H1 (cell line): ENCODE measurements at regions of chr9 and their contacts with region 1.

Region 1: GRCh38 chr9:35675732-35676392 is 2.1 kb downstream of the CA9 start:
- DNase-seq: peak in 1 of 2 experiments; percentile 98
- H3K4me3 ChIP-seq: peak overlapping the region; percentile 55 to 69 (median 60)
- H3K27ac ChIP-seq: no peak overlapping the region
- H3K4me1 ChIP-seq: peaks cover 0 to 15% (median 3%) of the 10 kb centered on the region in 4 experiments; a peak in 5 of 7 replicates
- H3K27me3 ChIP-seq: peaks cover 0 to 3% (median 3%) of the 10 kb centered on the region in 4 experiments; a peak in 4 of 7 replicates
- CTCF ChIP-seq: no peak
- EP300 ChIP-seq: no peak
- POLR2A ChIP-seq: peak; percentile 43 to 55; a peak in 2 of 3 replicates
- RAD21 ChIP-seq: no peak

Region 2: GRCh38 chr9:35636135-35636876 is 39.6 kb before region 1 on chr9:
- CTCF ChIA-PET with region 1: no interaction called
- POLR2A ChIA-PET with region 1: no interaction called
- DNase-seq: no peak
- H3K4me3 ChIP-seq: no peak overlapping the region
- H3K27ac ChIP-seq: no peak overlapping the region
- H3K4me1 ChIP-seq: no peaks in the 10 kb centered on the region
- H3K27me3 ChIP-seq: no peaks in the 10 kb centered on the region
- CTCF ChIP-seq: no peak
- EP300 ChIP-seq: no peak
- POLR2A ChIP-seq: no peak
- RAD21 ChIP-seq: no peak

Region 3: DNA sequence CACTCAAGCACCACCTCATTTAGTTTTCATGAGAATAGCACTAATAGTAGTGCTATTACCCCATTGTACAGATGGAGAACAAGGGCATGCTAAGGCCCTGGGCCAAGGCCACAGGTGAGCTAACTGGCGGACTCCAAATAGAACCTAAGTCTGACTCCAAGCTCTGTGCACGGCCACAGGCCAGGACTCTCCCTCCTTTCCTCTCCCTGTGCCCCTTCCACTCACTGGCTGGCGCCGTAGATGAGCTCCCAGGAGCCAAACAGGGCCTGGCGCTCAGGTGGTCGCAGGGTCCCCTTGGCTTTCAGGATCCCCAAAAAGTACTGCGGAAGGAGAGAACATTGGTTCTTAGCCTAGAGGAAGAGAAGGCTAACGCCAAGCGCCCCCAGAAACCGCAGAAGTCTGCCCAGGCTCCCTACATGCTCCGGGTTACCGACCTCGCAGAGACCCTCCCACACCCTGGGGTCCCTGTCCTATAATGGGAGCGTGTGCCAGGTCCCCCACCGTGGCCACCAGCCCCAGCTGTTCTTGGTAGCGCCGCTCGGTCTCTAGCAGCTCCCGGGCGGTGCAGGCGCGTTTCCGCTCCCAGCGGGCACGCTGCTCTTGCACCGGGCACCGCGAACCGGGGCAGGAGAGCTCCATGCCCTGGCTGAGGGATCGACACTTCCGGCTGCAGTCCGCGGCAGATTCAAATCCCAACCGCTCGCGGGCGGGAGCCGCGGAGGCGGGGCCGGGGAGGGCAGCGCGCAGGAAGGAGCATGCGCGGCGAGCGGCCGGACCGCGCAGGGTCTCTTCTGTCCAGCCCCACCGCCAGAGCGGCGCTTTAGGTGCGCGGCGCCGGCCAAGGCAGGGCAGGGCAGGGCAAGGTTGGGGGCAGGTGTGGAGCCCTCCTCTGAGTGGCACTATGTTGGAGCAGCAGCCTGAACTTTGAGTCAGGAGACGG is 11.1 kb before region 1 on chr9 and contains the start of gene ARHGEF39:
- CTCF ChIA-PET with region 1: interaction called, 29 read pairs
- POLR2A ChIA-PET with region 1: interaction called, 55 read pairs
- DNase-seq: peak; percentile 81 to 92
- H3K4me3 ChIP-seq: peak within 1 kb of the TSS; percentile 50 to 84 (median 78)
- H3K27ac ChIP-seq: 0 out of 2 replicates have a peak within 1 kb of the TSS, but pooled peaks have one; percentile 56
- H3K4me1 ChIP-seq: peaks cover 0 to 5% (median 1%) of the 10 kb centered on the region in 4 experiments; a peak in 5 of 7 replicates
- H3K27me3 ChIP-seq: no peaks in the 10 kb centered on the region
- CTCF ChIP-seq: peak; percentile 58 to 65 (median 60); a peak in 3 of 4 replicates
- EP300 ChIP-seq: no peak
- POLR2A ChIP-seq: peak in 1 of 2 experiments; percentile 75; a peak in 2 of 3 replicates
- RAD21 ChIP-seq: peak; percentile 41 to 44
- total RNA-seq, gene ARHGEF39: 17.5 and 18.6 TPM in 2 replicates